ENCODE measurements at regions of chr3 and their contacts with region 1.

Region 1: DNA sequence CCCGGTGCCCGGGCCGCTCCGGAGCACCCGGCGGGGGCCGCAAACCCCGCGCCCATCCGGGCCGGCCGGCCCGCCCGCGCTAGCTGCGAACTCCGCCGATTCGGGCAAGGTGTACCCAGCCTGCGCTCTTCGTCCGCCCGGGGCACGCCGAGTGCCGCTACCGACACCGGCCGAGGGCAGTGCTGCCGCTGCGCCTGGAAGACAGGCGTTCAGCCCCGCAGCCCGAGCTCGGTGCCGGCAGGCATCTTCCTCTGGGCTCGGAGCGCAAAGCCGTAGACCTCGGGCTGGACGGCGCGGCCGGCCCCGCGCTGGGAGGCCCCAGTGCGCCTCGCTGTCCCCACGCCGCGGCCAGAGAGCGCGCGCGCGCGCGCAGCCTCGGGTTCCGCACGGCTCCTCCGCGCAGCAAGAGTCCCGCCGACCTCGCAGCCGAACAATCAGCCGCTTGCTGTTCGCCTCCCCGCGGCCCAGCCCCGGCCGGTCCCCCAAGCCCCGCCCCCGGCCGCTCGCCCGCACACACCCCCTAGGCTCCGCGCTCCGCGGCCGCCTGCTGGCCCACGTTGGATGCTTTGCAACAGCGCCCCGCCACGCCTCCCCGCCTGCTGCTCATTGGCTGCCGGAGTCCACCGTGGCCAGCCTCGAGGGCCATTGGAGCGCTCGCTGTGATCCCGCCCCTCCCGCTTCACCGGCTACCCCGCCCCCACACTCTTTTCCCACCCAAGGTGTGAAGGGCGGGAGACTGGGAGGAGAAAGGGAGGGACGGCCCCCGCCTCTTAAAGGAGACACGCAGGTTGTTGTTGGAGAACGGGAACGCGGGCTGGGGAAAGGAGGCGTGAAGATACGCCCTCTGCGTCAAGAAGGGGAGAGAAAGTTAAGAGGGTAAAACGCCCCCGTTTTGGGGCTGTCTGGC is at the start of gene LRIG1:
- DNase-seq: peak; percentile 100
- H3K4me3 Mint-ChIP-seq: peak within 1 kb of the TSS; percentile 94
- H3K27ac Mint-ChIP-seq: peak within 1 kb of the TSS; percentile 91
- H3K4me1 Mint-ChIP-seq: peaks cover 55% of the 10 kb centered on the region
- H3K27me3 Mint-ChIP-seq: peaks cover 22% of the 10 kb centered on the region
- total RNA-seq, gene LRIG1: 50.3 and 52.8 TPM in 2 replicates

Region 2: GRCh38 chr3:66220602-66221377 is 280.0 kb before region 1 on chr3 and contains the start of gene SLC25A26:
- intact Hi-C with region 1: loop called (anchors 2 kb)
- DNase-seq: peak; percentile 99
- H3K4me3 Mint-ChIP-seq: peak within 1 kb of the TSS; percentile 98
- H3K27ac Mint-ChIP-seq: peak within 1 kb of the TSS; percentile 98
- H3K4me1 Mint-ChIP-seq: peaks cover 37% of the 10 kb centered on the region
- H3K27me3 Mint-ChIP-seq: no peaks in the 10 kb centered on the region
- total RNA-seq, gene SLC25A26: 17.7 and 22.1 TPM in 2 replicates

Region 3: DNA sequence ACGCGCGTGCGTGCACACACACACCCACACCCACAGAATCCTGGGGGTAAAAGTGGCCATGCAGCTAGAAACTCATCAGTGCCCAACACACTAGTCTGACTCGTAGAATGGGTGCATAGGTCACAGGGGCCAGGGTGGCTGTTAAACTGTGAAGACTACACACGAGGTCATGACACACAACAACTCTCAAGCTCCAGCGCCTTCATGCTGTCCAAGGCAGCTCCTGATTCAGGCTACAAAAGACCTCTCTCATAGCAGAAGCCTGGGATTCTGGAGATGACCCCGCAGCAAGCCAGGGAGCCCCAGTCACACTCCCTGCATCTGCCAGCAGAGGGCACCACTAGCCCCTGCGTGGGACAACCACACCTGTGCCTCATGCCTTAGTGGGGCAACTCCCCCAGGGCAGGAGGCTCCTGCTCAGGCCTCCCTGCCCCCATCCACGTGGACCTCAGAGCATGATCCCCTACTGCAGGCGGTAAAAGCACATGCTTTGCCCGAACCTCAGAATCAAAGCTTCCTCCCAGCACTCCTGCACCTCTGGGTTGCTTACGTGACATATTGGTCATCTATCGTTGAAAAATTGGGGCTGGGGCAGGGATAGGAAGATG is 93.1 kb before region 1 on chr3:
- intact Hi-C with region 1: loop called (anchors 1 kb)
- DNase-seq: peak; percentile 93
- H3K4me3 Mint-ChIP-seq: no peak overlapping the region
- H3K27ac Mint-ChIP-seq: peak overlapping the region; percentile 60
- H3K4me1 Mint-ChIP-seq: peaks cover 8% of the 10 kb centered on the region
- H3K27me3 Mint-ChIP-seq: no peaks in the 10 kb centered on the region

Region 4: DNA sequence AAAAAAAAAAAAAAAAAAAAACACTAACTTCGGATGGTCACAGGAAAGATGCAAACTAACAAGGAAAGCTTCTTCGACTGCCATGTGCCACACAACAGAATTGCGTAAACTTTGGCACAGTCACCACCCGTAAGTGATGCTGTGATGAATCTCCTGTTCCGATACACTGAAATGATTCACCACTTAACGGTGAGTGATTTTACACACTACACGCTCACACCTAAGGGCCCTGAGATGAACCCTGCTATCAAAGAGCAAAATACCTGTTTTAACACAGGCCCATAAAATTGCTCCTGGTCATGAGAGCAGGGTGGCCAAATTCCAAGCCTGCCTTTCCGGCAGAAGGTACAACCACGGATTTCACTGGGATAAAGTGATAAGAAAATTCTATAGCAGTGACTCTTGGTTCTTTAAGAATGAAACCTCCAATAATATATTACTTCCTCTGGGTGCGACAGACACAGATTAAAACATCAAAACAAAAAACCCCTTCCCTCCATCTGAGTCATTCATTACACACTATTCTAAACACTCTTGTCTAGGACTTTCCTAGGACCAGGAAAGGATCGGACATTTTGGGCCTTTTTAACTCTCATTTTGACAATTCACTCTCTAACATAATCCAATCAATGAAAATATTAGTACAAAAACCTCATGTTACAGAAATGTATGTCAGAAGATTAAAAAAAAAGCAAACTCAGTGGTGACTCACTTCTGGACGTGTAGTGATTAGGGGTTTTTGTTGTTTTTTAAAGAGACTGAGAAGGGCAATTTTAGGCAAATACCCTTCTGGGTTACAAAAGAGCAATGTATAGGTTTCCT is 28.3 kb before region 1 on chr3:
- intact Hi-C with region 1: loop called (anchors 1 kb)
- DNase-seq: peak; percentile 80
- H3K4me3 Mint-ChIP-seq: no peak overlapping the region
- H3K27ac Mint-ChIP-seq: no peak overlapping the region
- H3K4me1 Mint-ChIP-seq: peaks cover 62% of the 10 kb centered on the region
- H3K27me3 Mint-ChIP-seq: no peaks in the 10 kb centered on the region

Region 5: DNA sequence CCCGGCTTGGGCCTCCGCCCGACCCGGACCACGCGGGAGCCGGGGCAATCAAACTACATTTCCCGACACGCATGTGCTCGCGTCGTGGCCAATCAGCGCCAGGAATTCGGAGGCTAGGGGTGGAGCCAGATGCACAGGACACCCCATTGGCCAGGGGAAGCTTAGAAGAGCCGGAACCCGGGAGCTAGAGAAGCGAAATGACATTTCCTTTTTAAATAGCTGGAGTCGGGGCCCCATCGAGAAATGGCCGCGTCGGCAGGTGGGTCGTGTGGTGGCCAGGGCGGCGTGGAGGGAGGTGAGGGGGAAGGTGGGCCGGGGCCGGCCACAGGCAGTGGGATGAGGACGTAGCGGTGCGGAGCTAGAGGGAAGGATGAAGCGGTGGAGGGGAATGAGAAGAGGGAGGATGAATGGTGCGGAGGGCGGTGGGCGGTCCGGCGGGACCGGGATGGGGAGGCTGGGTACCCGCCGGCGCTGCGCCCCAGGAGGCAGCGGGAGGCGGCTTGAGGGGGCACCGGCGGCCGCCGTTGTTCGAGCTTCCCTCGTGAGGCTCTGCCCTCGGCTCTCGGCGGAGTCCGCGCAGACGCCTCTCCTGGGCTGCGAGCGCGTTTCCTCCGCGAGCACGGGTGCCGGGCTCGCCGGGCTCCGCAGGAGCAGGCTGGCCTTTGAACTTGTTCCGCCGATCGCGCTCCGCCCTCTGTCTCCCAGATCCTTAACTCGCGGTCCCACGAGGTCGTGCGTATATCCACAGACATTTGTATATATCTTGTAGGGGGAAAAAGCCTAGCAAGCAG is 497.5 kb after region 1 on chr3 and contains the start of gene KBTBD8:
- intact Hi-C with region 1: loop called (anchors 2 kb)
- DNase-seq: peak; percentile 99
- H3K4me3 Mint-ChIP-seq: peak within 1 kb of the TSS; percentile 89
- H3K27ac Mint-ChIP-seq: peak within 1 kb of the TSS; percentile 92
- H3K4me1 Mint-ChIP-seq: peaks cover 29% of the 10 kb centered on the region
- H3K27me3 Mint-ChIP-seq: peaks cover 24% of the 10 kb centered on the region
- total RNA-seq, gene KBTBD8: 16.8 and 17.0 TPM in 2 replicates